Tibial artery (tissue), 4 donors: ENCODE measurements at regions of chr6 and their contacts with region 1.

Region 1: GRCh38 chr6:73722318-73723060 is 26.5 kb downstream of the CD109 start:
- DNase-seq: no peak
- H3K4me3 ChIP-seq: no peak overlapping the region
- H3K27ac ChIP-seq: no peak overlapping the region
- H3K4me1 ChIP-seq: no peaks in the 10 kb centered on the region
- H3K27me3 ChIP-seq: no peaks in the 10 kb centered on the region
- CTCF ChIP-seq: no peak

Region 2: DNA sequence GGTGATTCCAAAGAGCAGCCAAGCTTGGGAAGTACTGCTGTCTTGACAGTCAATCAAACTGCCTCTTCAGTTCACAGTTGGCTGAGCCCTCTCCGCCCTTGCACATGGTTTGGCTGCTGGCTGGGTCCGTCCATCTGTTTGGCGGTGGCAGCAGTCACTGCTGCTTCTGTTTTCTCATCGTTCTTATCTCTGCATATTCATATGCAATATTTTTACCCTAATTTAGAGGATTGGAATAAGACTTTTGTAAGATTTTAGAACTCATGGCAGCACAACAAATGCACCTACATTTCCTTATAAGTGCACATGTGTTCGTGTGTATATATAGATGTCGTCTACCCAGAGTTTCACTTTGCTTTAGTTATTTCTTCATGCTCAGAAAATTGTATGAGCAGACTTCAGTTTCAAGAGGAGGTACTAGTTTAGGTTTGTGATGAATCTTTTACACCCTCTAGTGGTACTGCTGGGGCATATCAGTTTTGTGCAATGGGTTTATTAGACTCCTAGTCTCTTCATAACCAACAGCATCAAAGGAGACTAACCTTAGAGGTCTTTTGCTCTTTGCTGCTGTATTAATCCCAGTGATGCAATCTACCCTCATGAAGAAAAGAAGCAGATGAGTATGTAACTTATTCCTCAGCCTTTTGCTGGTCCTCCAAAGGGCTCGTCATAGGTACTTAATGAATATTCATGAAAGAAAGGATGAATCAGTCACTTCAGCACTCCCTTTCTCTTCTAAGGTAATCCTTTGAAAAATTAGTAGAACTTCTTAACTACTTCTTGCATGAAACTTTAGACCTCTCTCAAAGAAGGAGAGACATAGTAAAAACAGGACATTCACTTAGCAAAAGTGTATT is 541.5 kb before region 1 on chr6:
- intact Hi-C with region 1: loop called (anchors 10 kb)
- DNase-seq: no peak
- H3K4me3 ChIP-seq: peak overlapping the region; percentile 29 to 30
- H3K27ac ChIP-seq: no peak overlapping the region
- H3K4me1 ChIP-seq: no peaks in the 10 kb centered on the region
- H3K27me3 ChIP-seq: no peaks in the 10 kb centered on the region
- CTCF ChIP-seq: peak; percentile 83 to 88

Region 3: GRCh38 chr6:73409395-73409794 is 313.1 kb before region 1 on chr6:
- intact Hi-C with region 1: no loop called
- DNase-seq: no peak
- H3K4me3 ChIP-seq: no peak overlapping the region
- H3K27ac ChIP-seq: no peak overlapping the region
- H3K4me1 ChIP-seq: no peaks in the 10 kb centered on the region
- H3K27me3 ChIP-seq: no peaks in the 10 kb centered on the region
- CTCF ChIP-seq: no peak